CD8-positive, alpha-beta T cell (primary cell): ENCODE measurements at regions of chr3 and their contacts with region 1.

Region 1: DNA sequence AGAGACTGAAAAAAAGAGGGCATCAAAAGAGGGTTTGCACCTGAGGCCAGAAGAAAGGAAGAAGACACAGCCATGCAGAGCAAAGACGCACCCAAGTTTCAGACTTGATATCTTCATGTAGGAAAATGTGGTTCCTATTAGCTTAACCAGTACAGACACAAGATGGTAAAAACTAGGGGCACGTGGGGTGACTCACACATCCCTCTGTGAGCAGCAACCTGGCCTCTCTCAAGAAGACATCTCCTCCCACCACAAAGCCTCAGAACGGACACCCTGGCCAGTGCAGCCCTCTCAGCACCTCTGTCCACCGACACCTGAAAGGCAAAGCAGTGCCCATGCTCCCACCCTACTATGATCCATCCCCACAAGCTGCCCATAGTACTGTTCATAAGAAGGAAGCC is 33.3 kb downstream of the GLB1 start:
- DNase-seq: peak in 8 of 9 experiments; percentile 24 to 62 (median 43)
- ATAC-seq: peak; percentile 56
- H3K4me3 ChIP-seq: no peak overlapping the region
- H3K4me3 Mint-ChIP-seq: peak overlapping the region; percentile 1
- H3K27ac ChIP-seq: peak overlapping the region in 1 of 2 experiments; percentile 54
- H3K27ac Mint-ChIP-seq: peak overlapping the region; percentile 77
- H3K4me1 ChIP-seq: peaks cover 20% of the 10 kb centered on the region
- H3K4me1 Mint-ChIP-seq: peaks cover 43% of the 10 kb centered on the region
- H3K27me3 ChIP-seq: no peaks in the 10 kb centered on the region
- H3K27me3 Mint-ChIP-seq: no peaks in the 10 kb centered on the region
- CTCF ChIP-seq: no peak

Region 2: DNA sequence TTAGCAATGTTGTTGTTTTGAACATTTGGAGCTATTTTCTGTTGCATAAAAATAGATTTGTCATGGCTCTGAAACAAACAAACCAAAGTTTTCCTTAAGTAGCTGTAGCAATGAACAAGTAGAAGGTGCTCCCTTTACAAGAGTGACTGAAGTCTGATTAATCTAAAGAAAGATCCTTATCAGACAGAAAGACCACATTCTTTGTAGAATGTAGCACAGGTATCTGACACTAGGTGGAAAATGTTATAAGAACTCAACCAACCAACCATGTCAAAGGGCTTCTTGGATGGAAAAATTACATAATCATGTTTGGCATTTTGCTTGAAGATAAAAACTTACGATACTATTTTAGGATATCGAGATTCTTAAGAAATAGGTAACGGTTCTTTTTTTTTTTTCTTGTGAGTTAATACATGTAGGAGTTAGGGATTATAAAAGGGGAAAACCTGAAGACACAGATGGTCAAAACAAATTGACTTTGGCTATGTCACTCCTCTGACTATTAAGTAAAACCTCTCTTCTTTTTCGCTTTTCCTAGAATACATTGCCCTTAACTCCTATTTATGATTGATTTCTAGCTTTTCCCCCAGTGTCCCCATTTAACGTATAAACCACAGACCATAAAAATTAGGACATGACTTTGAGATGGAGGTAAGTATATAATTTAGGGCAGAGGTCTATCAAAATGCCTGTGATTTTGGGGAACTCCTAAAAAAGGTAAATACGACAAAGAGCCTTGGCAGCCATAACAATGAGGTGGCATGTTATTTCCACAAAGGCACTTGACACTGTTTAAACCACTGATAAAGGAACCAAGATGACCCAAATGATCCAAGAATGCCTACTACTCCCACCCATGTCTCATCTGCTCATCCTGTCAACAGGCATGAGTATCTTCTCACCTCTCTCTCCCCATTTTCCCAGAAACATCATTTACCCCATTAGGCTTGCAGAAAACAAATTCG is 40.2 kb before region 1 on chr3:
- CTCF ChIA-PET with region 1: no interaction called
- POLR2A ChIA-PET with region 1: interaction called, 3 read pairs
- intact Hi-C with region 1: loop called in 1 of 2 experiments (anchors 5 kb)
- DNase-seq: peak in 1 of 9 experiments; percentile 28
- ATAC-seq: peak; percentile 70
- H3K4me3 ChIP-seq: no peak overlapping the region
- H3K4me3 Mint-ChIP-seq: no peak overlapping the region
- H3K27ac ChIP-seq: no peak overlapping the region
- H3K27ac Mint-ChIP-seq: no peak overlapping the region
- H3K4me1 ChIP-seq: peaks cover 7% of the 10 kb centered on the region
- H3K4me1 Mint-ChIP-seq: peaks cover 28% of the 10 kb centered on the region
- H3K27me3 ChIP-seq: no peaks in the 10 kb centered on the region
- H3K27me3 Mint-ChIP-seq: no peaks in the 10 kb centered on the region
- CTCF ChIP-seq: no peak

Region 3: DNA sequence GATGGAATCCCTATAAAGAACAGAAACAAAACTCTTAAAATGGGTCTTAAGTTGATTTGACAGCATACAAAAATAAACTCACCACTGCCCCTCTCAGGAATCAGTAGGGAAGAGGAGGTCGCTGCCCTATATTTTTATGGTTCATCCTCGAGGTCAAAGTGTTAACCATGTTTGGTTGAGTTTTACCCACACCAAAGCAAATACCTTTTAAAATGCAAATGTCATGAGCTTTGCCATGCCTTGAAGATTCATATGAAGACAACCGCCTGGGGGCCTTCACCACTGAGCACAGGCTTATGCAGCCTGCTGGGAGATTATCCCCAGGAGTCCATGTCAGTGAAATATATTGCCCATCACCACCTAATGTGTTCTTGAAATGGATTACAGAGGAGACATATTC is 32.8 kb before region 1 on chr3:
- CTCF ChIA-PET with region 1: interaction called, 13 read pairs
- POLR2A ChIA-PET with region 1: no interaction called
- intact Hi-C with region 1: loop called in 1 of 2 experiments (anchors 1 kb)
- DNase-seq: peak in 3 of 9 experiments; percentile 33 to 70 (median 61)
- ATAC-seq: peak; percentile 85
- H3K4me3 ChIP-seq: no peak overlapping the region
- H3K4me3 Mint-ChIP-seq: no peak overlapping the region
- H3K27ac ChIP-seq: no peak overlapping the region
- H3K27ac Mint-ChIP-seq: no peak overlapping the region
- H3K4me1 ChIP-seq: no peaks in the 10 kb centered on the region
- H3K4me1 Mint-ChIP-seq: peaks cover 11% of the 10 kb centered on the region
- H3K27me3 ChIP-seq: no peaks in the 10 kb centered on the region
- H3K27me3 Mint-ChIP-seq: no peaks in the 10 kb centered on the region
- CTCF ChIP-seq: no peak

Region 4: GRCh38 chr3:33047842-33048834 is 15.5 kb before region 1 on chr3:
- CTCF ChIA-PET with region 1: interaction called, 5 read pairs
- POLR2A ChIA-PET with region 1: interaction called, 29 read pairs
- intact Hi-C with region 1: loop called in 1 of 2 experiments (anchors 1 kb)
- DNase-seq: peak; percentile 21 to 87 (median 58)
- ATAC-seq: peak; percentile 86
- H3K4me3 ChIP-seq: no peak overlapping the region
- H3K4me3 Mint-ChIP-seq: peak overlapping the region; percentile 66
- H3K27ac ChIP-seq: peak overlapping the region in 1 of 2 experiments; percentile 14
- H3K27ac Mint-ChIP-seq: peak overlapping the region; percentile 92
- H3K4me1 ChIP-seq: peaks cover 56% of the 10 kb centered on the region
- H3K4me1 Mint-ChIP-seq: peaks cover 73% of the 10 kb centered on the region
- H3K27me3 ChIP-seq: no peaks in the 10 kb centered on the region
- H3K27me3 Mint-ChIP-seq: no peaks in the 10 kb centered on the region
- CTCF ChIP-seq: no peak